ENCODE measurements at regions of chr7 and their contacts with region 1.

Region 1: DNA sequence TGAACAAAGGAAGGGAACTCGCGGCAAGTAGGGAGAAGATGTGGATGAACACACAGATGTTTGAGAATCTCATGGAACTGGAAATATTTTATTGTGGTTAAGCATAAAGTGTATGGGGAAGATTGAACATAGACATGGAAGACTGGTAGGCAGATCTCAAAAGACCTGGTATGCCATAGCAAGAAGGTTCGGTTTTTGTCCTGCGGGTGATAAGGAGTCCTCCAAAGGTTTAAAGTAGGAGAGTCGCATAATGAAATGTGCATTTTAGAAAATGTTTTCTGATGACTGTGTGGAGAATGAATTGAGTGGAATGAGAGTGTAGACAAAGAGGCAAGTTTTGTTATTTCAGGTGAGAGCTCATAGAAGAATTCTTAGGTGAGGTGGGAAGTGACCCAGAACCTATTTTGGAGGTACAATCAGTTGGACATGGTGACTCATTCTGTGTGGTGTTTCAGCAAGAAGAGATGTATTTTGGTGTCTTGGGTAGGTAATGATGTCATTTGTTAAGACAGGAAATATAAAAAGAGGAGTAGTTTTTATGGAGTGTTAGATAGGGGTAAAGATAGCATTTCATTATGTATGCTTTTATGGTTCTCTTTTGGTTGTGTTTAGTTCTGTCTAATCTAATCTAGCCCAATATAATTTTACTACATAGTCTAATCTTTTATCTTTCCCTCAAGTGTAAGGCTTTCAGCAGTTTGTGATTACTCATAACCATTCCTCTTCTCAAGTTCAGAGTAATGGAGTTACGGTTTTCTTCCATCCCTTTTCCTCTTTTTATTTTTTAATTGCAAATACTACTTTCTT is 239.2 kb downstream of the EXOC4 start:
- DNase-seq: no peak
- H3K4me3 Mint-ChIP-seq: peak overlapping the region; percentile 20
- H3K27ac Mint-ChIP-seq: peak overlapping the region; percentile 94
- H3K4me1 Mint-ChIP-seq: peaks cover 46% of the 10 kb centered on the region
- H3K27me3 Mint-ChIP-seq: no peaks in the 10 kb centered on the region

Region 2: GRCh38 chr7:133081599-133082389 is 410.3 kb before region 1 on chr7 and contains the start of gene CHCHD3:
- intact Hi-C with region 1: loop called (anchors 2 kb)
- DNase-seq: peak; percentile 96
- H3K4me3 Mint-ChIP-seq: peak within 1 kb of the TSS; percentile 93
- H3K27ac Mint-ChIP-seq: peak within 1 kb of the TSS; percentile 91
- H3K4me1 Mint-ChIP-seq: peaks cover 19% of the 10 kb centered on the region
- H3K27me3 Mint-ChIP-seq: peaks cover 8% of the 10 kb centered on the region
- total RNA-seq, gene CHCHD3: 67.0 and 69.3 TPM in 2 replicates

Region 3: DNA sequence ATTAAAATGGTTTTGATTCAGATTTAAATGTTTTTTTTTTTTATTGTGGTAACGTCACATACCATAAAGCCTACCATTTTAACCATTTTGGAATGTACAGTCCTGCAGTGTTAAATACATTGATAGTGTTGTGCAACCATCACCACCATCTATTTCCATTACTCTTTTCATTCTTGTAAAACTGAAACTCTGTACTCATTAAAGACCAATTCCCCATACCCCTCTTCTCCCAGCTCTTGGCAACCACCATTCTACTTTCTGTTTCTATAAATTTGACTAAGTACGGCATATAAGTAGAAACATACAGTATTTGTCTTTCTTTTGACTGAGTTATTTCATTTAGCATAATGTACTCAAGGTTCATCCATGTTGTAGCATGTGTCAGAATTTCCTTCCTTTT is 142.9 kb before region 1 on chr7:
- intact Hi-C with region 1: loop called (anchors 5 kb)
- DNase-seq: no peak
- H3K4me3 Mint-ChIP-seq: no peak overlapping the region
- H3K27ac Mint-ChIP-seq: no peak overlapping the region
- H3K4me1 Mint-ChIP-seq: peaks cover 3% of the 10 kb centered on the region
- H3K27me3 Mint-ChIP-seq: no peaks in the 10 kb centered on the region

Region 4: DNA sequence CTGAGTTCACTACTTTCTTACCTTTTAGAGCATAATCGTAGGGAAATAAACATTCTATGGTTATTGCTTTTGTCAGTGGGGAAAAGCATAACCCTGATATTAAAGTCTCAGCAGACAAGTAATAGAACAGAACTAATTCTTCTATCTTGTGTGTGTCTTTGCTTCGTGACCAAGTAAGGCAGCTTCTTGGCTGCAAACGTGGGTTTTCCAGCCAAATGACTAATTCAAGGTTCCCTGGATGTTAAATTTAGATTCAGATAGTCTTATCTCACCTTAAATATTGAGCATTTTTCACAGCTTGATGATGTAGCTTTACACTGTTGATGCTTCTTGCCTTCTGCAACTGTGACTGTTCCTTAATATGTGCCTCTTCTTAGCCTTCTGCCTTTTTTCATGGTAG is 126.2 kb before region 1 on chr7:
- intact Hi-C with region 1: no loop called
- DNase-seq: no peak
- H3K4me3 Mint-ChIP-seq: no peak overlapping the region
- H3K27ac Mint-ChIP-seq: no peak overlapping the region
- H3K4me1 Mint-ChIP-seq: peaks cover 13% of the 10 kb centered on the region
- H3K27me3 Mint-ChIP-seq: no peaks in the 10 kb centered on the region

Region 5: DNA sequence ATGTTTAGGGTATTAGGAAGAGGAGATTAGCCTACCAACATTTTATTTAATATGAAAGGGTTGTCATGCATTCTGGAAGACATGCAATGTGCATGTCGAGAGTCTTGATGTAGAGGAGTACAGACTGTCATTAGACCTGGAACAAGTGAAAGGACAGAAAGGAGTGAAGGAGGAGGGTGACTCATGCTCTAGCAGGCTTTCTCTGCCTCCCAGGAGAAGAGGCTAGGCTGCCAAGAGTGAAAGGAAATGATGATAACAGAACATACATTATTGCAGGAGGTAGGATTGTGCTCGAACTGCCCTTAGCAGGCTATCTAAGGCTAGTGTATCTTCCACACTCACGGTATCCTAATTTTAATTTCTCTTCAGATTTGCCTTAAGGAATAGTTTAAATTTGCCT is 10.4 kb before region 1 on chr7:
- intact Hi-C with region 1: loop called (anchors 1 kb)
- DNase-seq: no peak
- H3K4me3 Mint-ChIP-seq: peak overlapping the region; percentile 59
- H3K27ac Mint-ChIP-seq: peak overlapping the region; percentile 78
- H3K4me1 Mint-ChIP-seq: peaks cover 69% of the 10 kb centered on the region
- H3K27me3 Mint-ChIP-seq: no peaks in the 10 kb centered on the region

Region 6: DNA sequence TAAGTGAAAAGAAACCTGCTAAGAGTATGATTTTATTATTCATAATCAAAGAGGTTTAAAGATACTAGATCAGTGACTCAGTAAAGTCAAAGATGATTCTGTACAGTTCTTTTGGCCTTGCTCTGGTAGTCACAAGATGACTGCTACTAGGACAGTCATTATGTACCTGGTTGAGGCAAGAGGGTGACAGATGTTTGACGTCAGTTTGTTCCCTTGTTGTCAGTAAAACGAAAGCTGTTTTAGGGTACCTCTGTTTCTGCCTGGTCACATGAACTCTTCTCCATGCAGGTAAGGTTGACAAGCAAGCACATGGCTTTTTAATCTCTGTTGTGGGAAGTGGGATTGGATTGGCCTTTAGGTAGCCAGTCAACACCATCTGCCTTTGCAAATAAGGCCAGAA is 68.9 kb after region 1 on chr7:
- intact Hi-C with region 1: loop called (anchors 2 kb)
- DNase-seq: no peak
- H3K4me3 Mint-ChIP-seq: no peak overlapping the region
- H3K27ac Mint-ChIP-seq: peak overlapping the region; percentile 55
- H3K4me1 Mint-ChIP-seq: peaks cover 12% of the 10 kb centered on the region
- H3K27me3 Mint-ChIP-seq: no peaks in the 10 kb centered on the region

Region 7: GRCh38 chr7:134458806-134459698 is 967.0 kb after region 1 on chr7 and contains the start of gene AKR1B1:
- intact Hi-C with region 1: loop called (anchors 10 kb)
- DNase-seq: peak; percentile 85
- H3K4me3 Mint-ChIP-seq: peak within 1 kb of the TSS; percentile 82
- H3K27ac Mint-ChIP-seq: peak within 1 kb of the TSS; percentile 64
- H3K4me1 Mint-ChIP-seq: peaks cover 31% of the 10 kb centered on the region
- H3K27me3 Mint-ChIP-seq: no peaks in the 10 kb centered on the region
- total RNA-seq, gene AKR1B1: 102 and 107 TPM in 2 replicates